ENCODE measurements at regions of chr14 and their contacts with region 1.

Region 1: GRCh38 chr14:100645192-100645990 is 58.2 kb upstream of the BEGAIN start:
- DNase-seq: peak; percentile 65 to 91 (median 89)
- ATAC-seq: peak; percentile 88
- H3K4me3 ChIP-seq: no peak overlapping the region
- H3K4me3 Mint-ChIP-seq: no peak overlapping the region
- H3K27ac ChIP-seq: no peak overlapping the region
- H3K27ac Mint-ChIP-seq: peak overlapping the region; percentile 14
- H3K4me1 ChIP-seq: peaks cover 46% of the 10 kb centered on the region
- H3K4me1 Mint-ChIP-seq: peaks cover 46% of the 10 kb centered on the region
- H3K27me3 ChIP-seq: no peaks in the 10 kb centered on the region
- H3K27me3 Mint-ChIP-seq: no peaks in the 10 kb centered on the region
- CTCF ChIP-seq: peak; percentile 72

Region 2: DNA sequence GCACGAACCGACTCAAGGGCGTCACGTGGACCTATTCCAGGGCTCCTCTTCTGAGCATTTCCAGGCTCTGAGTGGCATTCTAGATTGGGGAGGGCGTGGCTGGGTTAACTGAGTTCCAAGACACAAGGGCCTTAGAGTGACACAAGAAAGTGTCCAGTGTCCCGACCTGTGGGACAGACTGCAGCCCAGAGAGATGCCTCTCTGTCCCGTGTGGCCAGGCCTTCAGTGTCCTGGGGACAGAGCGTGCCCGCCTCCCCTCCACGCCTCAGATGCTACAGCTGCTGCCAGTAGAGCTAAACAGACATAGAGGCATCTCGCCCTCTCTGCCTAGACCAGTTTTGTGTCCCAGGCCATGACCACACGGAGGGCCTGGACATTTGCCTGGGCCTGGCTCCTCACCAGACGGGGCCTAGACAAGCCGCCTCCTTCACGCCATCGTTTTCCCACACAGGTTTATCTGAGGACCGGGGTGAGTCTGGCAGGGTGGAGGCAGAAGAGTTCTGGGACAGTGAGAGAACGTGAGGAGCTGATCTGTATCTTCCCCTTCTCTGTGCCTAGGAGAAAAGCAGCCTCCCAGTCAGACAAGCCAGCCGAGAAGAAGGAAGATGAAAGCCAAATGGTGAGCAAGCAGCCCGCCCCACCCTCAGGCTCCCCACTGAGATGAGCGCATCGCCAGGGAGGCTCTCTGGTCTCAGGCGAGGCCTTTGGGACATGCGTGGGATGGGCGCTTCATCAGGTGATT is 513.1 kb before region 1 on chr14:
- CTCF ChIA-PET with region 1: no interaction called
- POLR2A ChIA-PET with region 1: no interaction called
- intact Hi-C with region 1: no loop called
- DNase-seq: no peak
- ATAC-seq: no peak
- H3K4me3 ChIP-seq: no peak overlapping the region
- H3K4me3 Mint-ChIP-seq: no peak overlapping the region
- H3K27ac ChIP-seq: no peak overlapping the region
- H3K27ac Mint-ChIP-seq: no peak overlapping the region
- H3K4me1 ChIP-seq: no peaks in the 10 kb centered on the region
- H3K4me1 Mint-ChIP-seq: peaks cover 9% of the 10 kb centered on the region
- H3K27me3 ChIP-seq: no peaks in the 10 kb centered on the region
- H3K27me3 Mint-ChIP-seq: no peaks in the 10 kb centered on the region
- CTCF ChIP-seq: no peak

Region 3: GRCh38 chr14:100440187-100440631 is 205.2 kb before region 1 on chr14:
- CTCF ChIA-PET with region 1: interaction called, 50 read pairs
- POLR2A ChIA-PET with region 1: interaction called, 3 read pairs
- intact Hi-C with region 1: loop called in 1 of 2 experiments (anchors 2 kb)
- DNase-seq: peak in 7 of 9 experiments; percentile 10 to 58 (median 45)
- ATAC-seq: peak; percentile 40
- H3K4me3 ChIP-seq: no peak overlapping the region
- H3K4me3 Mint-ChIP-seq: no peak overlapping the region
- H3K27ac ChIP-seq: no peak overlapping the region
- H3K27ac Mint-ChIP-seq: no peak overlapping the region
- H3K4me1 ChIP-seq: no peaks in the 10 kb centered on the region
- H3K4me1 Mint-ChIP-seq: no peaks in the 10 kb centered on the region
- H3K27me3 ChIP-seq: no peaks in the 10 kb centered on the region
- H3K27me3 Mint-ChIP-seq: no peaks in the 10 kb centered on the region
- CTCF ChIP-seq: no peak

Region 4: DNA sequence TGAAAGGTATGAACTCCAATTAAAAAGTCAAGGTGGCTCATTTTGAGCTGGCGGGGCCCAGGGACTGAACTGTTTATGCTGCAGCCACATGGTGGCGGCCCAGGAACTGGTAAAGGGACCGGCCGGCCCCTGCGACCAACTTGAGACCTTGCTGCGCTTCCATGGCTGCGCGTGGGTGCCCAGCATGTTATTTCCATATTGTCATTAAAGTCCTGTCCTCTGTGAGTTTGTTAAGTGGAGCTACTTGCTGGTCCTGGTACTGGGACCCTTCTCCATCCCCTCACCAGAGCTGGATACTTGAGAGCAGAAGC is 120.5 kb before region 1 on chr14:
- CTCF ChIA-PET with region 1: interaction called, 38 read pairs
- POLR2A ChIA-PET with region 1: no interaction called
- intact Hi-C with region 1: loop called in 1 of 2 experiments (anchors 2 kb)
- DNase-seq: peak in 4 of 9 experiments; percentile 10 to 61 (median 42)
- ATAC-seq: no peak
- H3K4me3 ChIP-seq: no peak overlapping the region
- H3K4me3 Mint-ChIP-seq: no peak overlapping the region
- H3K27ac ChIP-seq: no peak overlapping the region
- H3K27ac Mint-ChIP-seq: no peak overlapping the region
- H3K4me1 ChIP-seq: no peaks in the 10 kb centered on the region
- H3K4me1 Mint-ChIP-seq: no peaks in the 10 kb centered on the region
- H3K27me3 ChIP-seq: no peaks in the 10 kb centered on the region
- H3K27me3 Mint-ChIP-seq: no peaks in the 10 kb centered on the region
- CTCF ChIP-seq: peak; percentile 45

Region 5: DNA sequence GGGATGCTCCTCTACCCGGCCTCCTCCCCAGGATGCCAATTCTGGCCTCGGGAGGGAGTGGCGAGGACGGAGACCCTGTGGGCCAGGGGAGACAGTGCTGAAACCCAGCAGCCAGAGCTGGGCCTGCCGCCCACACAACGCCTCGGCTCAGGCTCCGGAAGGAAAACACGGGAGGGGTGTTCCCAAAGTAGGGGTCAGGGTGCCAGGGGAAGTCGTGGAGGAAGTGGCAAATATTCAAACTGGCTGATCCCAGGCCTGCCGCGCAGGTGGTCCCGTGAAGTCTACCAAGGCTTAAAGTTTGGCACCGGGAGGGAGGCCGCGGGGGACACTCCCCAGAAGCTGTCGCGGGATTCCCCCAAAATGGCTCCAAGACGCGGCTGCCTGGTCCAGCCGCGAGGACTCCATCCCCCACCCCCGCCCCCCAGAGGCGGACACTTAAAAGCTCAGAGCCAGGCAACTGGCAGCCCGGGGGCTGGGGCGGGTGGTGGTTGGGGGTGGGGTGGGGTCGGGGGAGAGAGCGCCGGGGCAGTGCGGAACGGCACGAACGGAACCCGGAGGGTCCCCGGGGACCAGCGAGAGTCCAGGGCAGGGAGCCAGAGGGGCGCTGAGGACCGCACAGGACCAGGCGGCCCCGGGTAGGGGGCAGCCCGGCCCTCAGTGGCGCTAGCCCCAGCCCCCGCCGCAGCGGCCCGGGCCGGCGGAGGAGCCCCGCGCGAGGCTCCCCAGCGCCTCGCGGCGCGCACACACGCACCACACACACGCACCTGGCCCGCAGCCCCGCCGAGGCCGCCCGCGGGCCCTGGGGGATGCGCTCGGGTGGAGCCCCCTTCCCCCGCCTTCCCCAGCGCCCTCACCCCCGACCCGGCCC is 78.1 kb before region 1 on chr14:
- CTCF ChIA-PET with region 1: interaction called, 3 read pairs
- POLR2A ChIA-PET with region 1: no interaction called
- intact Hi-C with region 1: loop called in 1 of 2 experiments (anchors 5 kb)
- DNase-seq: peak in 3 of 9 experiments; percentile 20 to 53 (median 43)
- ATAC-seq: peak; percentile 40
- H3K4me3 ChIP-seq: peak overlapping the region; percentile 19 to 35
- H3K4me3 Mint-ChIP-seq: peak overlapping the region; percentile 69
- H3K27ac ChIP-seq: no peak overlapping the region
- H3K27ac Mint-ChIP-seq: no peak overlapping the region
- H3K4me1 ChIP-seq: peaks cover 6% of the 10 kb centered on the region
- H3K4me1 Mint-ChIP-seq: peaks cover 4% of the 10 kb centered on the region
- H3K27me3 ChIP-seq: peaks cover 12 to 17% of the 10 kb centered on the region in 2 experiments
- H3K27me3 Mint-ChIP-seq: peaks cover 38% of the 10 kb centered on the region
- CTCF ChIP-seq: no peak

Region 6: GRCh38 chr14:101167428-101167827 is 522.0 kb after region 1 on chr14:
- CTCF ChIA-PET with region 1: no interaction called
- POLR2A ChIA-PET with region 1: no interaction called
- intact Hi-C with region 1: no loop called
- DNase-seq: no peak
- ATAC-seq: no peak
- H3K4me3 ChIP-seq: no peak overlapping the region
- H3K4me3 Mint-ChIP-seq: no peak overlapping the region
- H3K27ac ChIP-seq: no peak overlapping the region
- H3K27ac Mint-ChIP-seq: no peak overlapping the region
- H3K4me1 ChIP-seq: no peaks in the 10 kb centered on the region
- H3K4me1 Mint-ChIP-seq: no peaks in the 10 kb centered on the region
- H3K27me3 ChIP-seq: no peaks in the 10 kb centered on the region
- H3K27me3 Mint-ChIP-seq: peaks cover 6% of the 10 kb centered on the region
- CTCF ChIP-seq: no peak